Caco-2 (cell line): ENCODE measurements at regions of chr5 and their contacts with region 1.

Region 1: DNA sequence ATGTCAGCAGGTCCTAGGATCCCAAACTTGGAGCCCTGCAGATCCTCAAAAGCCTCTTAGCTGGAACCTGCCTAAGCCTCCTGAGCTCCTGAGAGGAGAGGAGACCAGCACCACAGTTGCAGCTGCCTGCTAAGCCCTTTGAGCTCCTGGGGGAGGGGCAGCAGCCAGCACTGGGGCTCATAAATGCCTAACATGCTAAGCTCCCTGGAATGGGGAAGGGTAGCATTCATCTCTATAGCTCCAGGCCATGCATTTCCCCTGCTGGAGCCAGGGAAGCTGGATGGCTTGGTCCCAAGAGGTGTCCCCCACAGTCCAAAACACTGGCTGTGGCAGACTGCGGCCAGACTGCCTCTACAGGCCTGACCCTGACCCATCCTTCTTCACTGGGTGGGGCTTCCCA is 182.7 kb downstream of the KCNN2 start:
- DNase-seq: peak; percentile 40 to 60
- H3K4me3 ChIP-seq: no peak overlapping the region
- H3K4me3 Mint-ChIP-seq: no peak overlapping the region
- H3K27ac Mint-ChIP-seq: no peak overlapping the region
- H3K4me1 ChIP-seq: no peaks in the 10 kb centered on the region
- H3K4me1 Mint-ChIP-seq: no peaks in the 10 kb centered on the region
- H3K27me3 ChIP-seq: no peaks in the 10 kb centered on the region
- H3K27me3 Mint-ChIP-seq: no peaks in the 10 kb centered on the region
- CTCF ChIP-seq: no peak

Region 2: GRCh38 chr5:114387433-114387832 is 157.1 kb before region 1 on chr5:
- CTCF ChIA-PET with region 1: no interaction called
- POLR2A ChIA-PET with region 1: no interaction called
- intact Hi-C with region 1: loop called (anchors 10 kb)
- DNase-seq: no peak
- H3K4me3 ChIP-seq: no peak overlapping the region
- H3K4me3 Mint-ChIP-seq: no peak overlapping the region
- H3K27ac Mint-ChIP-seq: no peak overlapping the region
- H3K4me1 ChIP-seq: no peaks in the 10 kb centered on the region
- H3K4me1 Mint-ChIP-seq: no peaks in the 10 kb centered on the region
- H3K27me3 ChIP-seq: no peaks in the 10 kb centered on the region
- H3K27me3 Mint-ChIP-seq: peaks cover 4% of the 10 kb centered on the region
- CTCF ChIP-seq: no peak